ENCODE measurements at regions of chr7 and their contacts with region 1.

Region 1: GRCh38 chr7:8217200-8218068 is 44.5 kb downstream of the ICA1 start:
- DNase-seq: no peak
- H3K4me3 ChIP-seq: no peak overlapping the region
- H3K27ac ChIP-seq: no peak overlapping the region
- H3K4me1 ChIP-seq: peaks cover 0 to 3% (median 0%) of the 10 kb centered on the region in 4 donors
- H3K27me3 ChIP-seq: no peaks in the 10 kb centered on the region
- CTCF ChIP-seq: peak; percentile 70 to 81 (median 77)
- EP300 ChIP-seq: no peak
- POLR2A ChIP-seq: no peak

Region 2: DNA sequence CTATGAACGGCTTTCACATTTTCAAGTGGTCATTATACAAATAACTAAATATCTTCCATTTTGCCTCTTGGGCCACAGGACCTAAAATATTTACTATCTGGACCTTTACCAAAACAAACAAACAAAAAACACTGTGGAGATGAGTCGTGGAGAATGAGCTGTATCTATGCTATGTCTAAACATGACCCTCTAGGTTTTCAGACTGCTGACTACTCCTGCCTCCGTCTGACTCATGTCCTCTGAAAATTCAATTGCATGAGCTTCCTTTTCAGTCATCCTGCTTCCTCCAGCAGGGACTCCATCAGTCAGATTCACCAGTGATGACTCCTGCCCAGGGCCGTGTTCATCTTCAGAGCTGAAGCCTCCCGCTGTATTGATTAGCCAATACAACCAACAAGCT is 778.6 kb before region 1 on chr7:
- in situ Hi-C with region 1: loop called in 1 of 4 experiments (anchors 25 kb)
- intact Hi-C with region 1: no loop called
- DNase-seq: no peak
- H3K4me3 ChIP-seq: no peak overlapping the region
- H3K27ac ChIP-seq: no peak overlapping the region
- H3K4me1 ChIP-seq: peaks cover 0 to 11% (median 0%) of the 10 kb centered on the region in 4 donors
- H3K27me3 ChIP-seq: no peaks in the 10 kb centered on the region
- CTCF ChIP-seq: no peak
- EP300 ChIP-seq: no peak
- POLR2A ChIP-seq: no peak

Region 3: GRCh38 chr7:7595451-7595850 is 622.0 kb before region 1 on chr7:
- in situ Hi-C with region 1: loop called in 3 of 4 experiments (anchors 25 kb)
- intact Hi-C with region 1: no loop called
- DNase-seq: no peak
- H3K4me3 ChIP-seq: no peak overlapping the region
- H3K27ac ChIP-seq: no peak overlapping the region
- H3K4me1 ChIP-seq: no peaks in the 10 kb centered on the region
- H3K27me3 ChIP-seq: no peaks in the 10 kb centered on the region
- CTCF ChIP-seq: peak; percentile 29 to 54 (median 41)
- EP300 ChIP-seq: no peak
- POLR2A ChIP-seq: no peak

Region 4: DNA sequence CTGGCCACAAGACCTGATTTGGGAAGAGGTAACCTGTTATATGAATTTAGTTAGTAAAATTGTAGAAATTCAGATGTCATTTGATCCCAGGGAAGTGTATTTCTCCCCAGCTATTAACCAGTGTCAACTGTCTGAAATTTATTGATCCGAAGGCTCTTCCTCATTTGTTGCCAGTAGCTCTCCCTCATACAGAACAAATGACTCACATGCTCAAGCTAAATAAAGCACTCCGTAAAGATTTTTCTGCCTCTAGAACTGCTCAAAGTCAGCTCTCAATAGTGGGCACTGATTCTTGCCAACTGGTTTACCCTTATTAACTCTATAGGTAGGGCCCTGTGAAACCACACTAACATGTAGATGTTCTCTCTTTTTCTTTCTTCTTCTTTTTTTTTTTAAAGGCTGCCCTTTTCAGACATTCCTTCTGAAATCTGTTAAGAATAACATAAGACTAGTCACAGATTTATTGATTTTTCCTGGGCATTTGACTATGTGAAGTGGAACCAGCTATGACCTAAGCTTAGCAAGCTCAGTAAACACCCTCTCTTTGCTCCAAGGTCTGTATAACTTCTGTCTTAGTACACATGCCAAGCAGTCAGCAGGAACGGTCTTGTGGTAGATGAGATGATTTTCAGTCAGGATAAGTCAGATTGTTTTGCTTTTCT is 520.8 kb before region 1 on chr7:
- in situ Hi-C with region 1: loop called in 1 of 4 experiments (anchors 10 kb)
- intact Hi-C with region 1: no loop called
- DNase-seq: no peak
- H3K4me3 ChIP-seq: no peak overlapping the region
- H3K27ac ChIP-seq: peak overlapping the region in 3 of 4 donors; percentile 6 to 18 (median 16)
- H3K4me1 ChIP-seq: peaks cover 0 to 36% (median 10%) of the 10 kb centered on the region in 4 donors
- H3K27me3 ChIP-seq: no peaks in the 10 kb centered on the region
- CTCF ChIP-seq: no peak
- EP300 ChIP-seq: no peak
- POLR2A ChIP-seq: no peak

Region 5: DNA sequence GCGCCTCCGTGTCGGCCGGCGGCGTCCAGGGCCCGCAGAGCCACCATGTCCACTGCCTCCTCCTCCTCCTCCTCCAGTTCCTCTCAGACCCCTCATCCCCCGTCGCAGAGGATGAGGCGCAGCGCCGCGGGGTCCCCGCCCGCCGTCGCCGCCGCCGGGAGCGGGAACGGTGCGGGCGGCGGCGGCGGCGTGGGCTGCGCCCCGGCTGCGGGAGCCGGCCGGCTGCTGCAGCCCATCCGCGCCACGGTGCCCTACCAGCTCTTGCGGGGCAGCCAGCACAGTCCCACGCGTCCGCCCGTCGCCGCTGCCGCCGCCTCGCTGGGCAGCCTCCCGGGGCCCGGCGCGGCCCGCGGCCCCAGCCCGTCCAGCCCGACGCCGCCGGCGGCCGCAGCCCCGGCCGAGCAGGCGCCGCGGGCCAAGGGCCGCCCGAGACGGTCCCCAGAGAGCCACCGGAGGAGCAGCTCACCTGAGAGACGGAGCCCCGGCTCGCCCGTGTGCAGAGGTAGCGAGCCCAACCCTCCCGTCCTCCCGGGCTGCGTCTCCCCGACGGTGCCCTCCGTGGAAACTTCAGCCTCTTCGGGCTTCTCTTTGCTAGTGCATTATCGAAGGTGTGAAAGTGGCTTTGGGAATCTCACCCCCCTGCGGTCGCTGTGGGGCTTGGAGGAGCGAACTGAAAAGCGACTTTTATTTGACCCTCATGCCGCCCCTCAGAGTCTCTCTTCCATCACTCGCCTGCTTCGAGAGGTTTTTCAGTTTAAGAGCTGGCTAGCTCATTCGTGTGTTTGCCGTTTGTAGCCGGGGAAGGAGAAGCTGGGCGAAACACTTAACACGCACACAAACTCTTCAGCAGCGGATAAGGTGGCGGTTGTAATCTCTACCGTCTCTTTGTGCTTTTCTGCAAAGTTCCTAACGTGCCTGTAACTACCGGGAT is 247.9 kb before region 1 on chr7:
- in situ Hi-C with region 1: no loop called
- intact Hi-C with region 1: loop called (anchors 5 kb)
- DNase-seq: peak; percentile 44
- H3K4me3 ChIP-seq: peak overlapping the region; percentile 78 to 100 (median 96)
- H3K27ac ChIP-seq: peak overlapping the region; percentile 95 to 100 (median 98)
- H3K4me1 ChIP-seq: peaks cover 0 to 23% (median 8%) of the 10 kb centered on the region in 4 donors
- H3K27me3 ChIP-seq: no peaks in the 10 kb centered on the region
- CTCF ChIP-seq: peak in 2 of 5 experiments; percentile 4 to 35
- EP300 ChIP-seq: no peak
- POLR2A ChIP-seq: no peak